CD4-positive, alpha-beta memory T cell (primary cell): ENCODE measurements at regions of chr20 and their contacts with region 1.

Region 1: GRCh38 chr20:49915378-49916145 is at the start of gene SPATA2:
- DNase-seq: peak; percentile 93 to 97 (median 94)
- H3K4me3 ChIP-seq: peak within 1 kb of the TSS; percentile 85 to 99
- H3K4me3 Mint-ChIP-seq: peak within 1 kb of the TSS; percentile 98 to 99 (median 99)
- H3K27ac ChIP-seq: peak within 1 kb of the TSS; percentile 97
- H3K27ac Mint-ChIP-seq: peak within 1 kb of the TSS; percentile 98 to 100 (median 100)
- H3K4me1 ChIP-seq: peaks cover 24% of the 10 kb centered on the region
- H3K4me1 Mint-ChIP-seq: peaks cover 20 to 47% (median 33%) of the 10 kb centered on the region in 4 donors
- H3K27me3 ChIP-seq: no peaks in the 10 kb centered on the region
- H3K27me3 Mint-ChIP-seq: peaks cover 0 to 2% of the 10 kb centered on the region in 2 donors
- total RNA-seq, gene SPATA2: 8.7 to 9.3 TPM

Region 2: GRCh38 chr20:49812463-49813304 is 102.9 kb before region 1 on chr20 and contains the start of gene SLC9A8:
- CTCF ChIA-PET with region 1: interaction called, 4 read pairs
- POLR2A ChIA-PET with region 1: interaction called, 3 read pairs
- intact Hi-C with region 1: loop called (anchors 1 kb)
- DNase-seq: peak; percentile 76 to 94 (median 82)
- H3K4me3 ChIP-seq: peak within 1 kb of the TSS; percentile 62 to 66
- H3K4me3 Mint-ChIP-seq: peak within 1 kb of the TSS; percentile 92 to 98 (median 96)
- H3K27ac ChIP-seq: peak within 1 kb of the TSS; percentile 93
- H3K27ac Mint-ChIP-seq: peak within 1 kb of the TSS; percentile 98 to 99 (median 99)
- H3K4me1 ChIP-seq: peaks cover 23% of the 10 kb centered on the region
- H3K4me1 Mint-ChIP-seq: peaks cover 22 to 50% (median 32%) of the 10 kb centered on the region in 4 donors
- H3K27me3 ChIP-seq: no peaks in the 10 kb centered on the region
- H3K27me3 Mint-ChIP-seq: no peaks in the 10 kb centered on the region
- total RNA-seq, gene SLC9A8: 24.4 to 25.6 TPM

Region 3: DNA sequence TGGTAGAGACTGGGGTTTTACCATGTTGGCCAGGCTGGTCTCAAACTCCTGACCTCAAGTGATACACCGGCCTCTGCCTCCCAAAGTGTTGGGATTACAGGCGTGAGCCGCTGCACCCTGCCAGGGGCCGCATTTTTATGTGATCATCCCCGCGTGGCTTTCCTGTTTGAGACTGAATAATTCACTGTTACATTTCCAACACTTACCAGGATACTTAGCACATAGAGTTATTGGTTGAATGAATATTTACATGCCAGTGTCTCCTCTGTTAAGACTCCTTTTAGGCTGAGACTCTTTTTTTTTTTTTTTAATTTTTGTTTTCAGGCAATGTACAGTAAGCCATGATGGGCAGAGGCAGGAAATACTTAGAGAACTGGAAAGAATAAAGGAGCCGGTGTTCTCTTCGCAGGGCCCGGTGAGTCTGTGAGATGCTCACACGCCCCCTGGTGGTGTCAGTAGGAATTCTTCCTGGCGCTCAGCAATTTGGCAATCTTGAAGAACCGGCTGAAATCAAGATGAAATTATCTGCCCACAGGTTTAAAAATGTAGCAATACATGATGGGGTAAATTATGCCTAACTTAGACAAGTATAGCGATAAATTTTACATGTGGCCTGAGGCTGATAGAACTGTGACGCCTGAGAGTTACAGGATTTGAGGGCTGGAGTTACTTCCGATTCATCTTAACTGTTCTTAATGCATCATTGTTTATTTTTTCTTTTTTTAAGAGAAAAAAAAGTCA is 13.0 kb after region 1 on chr20:
- CTCF ChIA-PET with region 1: interaction called, 9 read pairs
- POLR2A ChIA-PET with region 1: no interaction called
- intact Hi-C with region 1: loop called (anchors 1 kb)
- DNase-seq: peak; percentile 77 to 79 (median 78)
- H3K4me3 ChIP-seq: no peak overlapping the region
- H3K4me3 Mint-ChIP-seq: peak overlapping the region in 4 of 8 donors; percentile 16 to 60 (median 44)
- H3K27ac ChIP-seq: no peak overlapping the region
- H3K27ac Mint-ChIP-seq: peak overlapping the region in 6 of 7 donors; percentile 5 to 81 (median 37)
- H3K4me1 ChIP-seq: no peaks in the 10 kb centered on the region
- H3K4me1 Mint-ChIP-seq: peaks cover 1 to 5% (median 4%) of the 10 kb centered on the region in 4 donors
- H3K27me3 ChIP-seq: no peaks in the 10 kb centered on the region
- H3K27me3 Mint-ChIP-seq: peaks cover 1% of the 10 kb centered on the region in 2 donors

Region 4: DNA sequence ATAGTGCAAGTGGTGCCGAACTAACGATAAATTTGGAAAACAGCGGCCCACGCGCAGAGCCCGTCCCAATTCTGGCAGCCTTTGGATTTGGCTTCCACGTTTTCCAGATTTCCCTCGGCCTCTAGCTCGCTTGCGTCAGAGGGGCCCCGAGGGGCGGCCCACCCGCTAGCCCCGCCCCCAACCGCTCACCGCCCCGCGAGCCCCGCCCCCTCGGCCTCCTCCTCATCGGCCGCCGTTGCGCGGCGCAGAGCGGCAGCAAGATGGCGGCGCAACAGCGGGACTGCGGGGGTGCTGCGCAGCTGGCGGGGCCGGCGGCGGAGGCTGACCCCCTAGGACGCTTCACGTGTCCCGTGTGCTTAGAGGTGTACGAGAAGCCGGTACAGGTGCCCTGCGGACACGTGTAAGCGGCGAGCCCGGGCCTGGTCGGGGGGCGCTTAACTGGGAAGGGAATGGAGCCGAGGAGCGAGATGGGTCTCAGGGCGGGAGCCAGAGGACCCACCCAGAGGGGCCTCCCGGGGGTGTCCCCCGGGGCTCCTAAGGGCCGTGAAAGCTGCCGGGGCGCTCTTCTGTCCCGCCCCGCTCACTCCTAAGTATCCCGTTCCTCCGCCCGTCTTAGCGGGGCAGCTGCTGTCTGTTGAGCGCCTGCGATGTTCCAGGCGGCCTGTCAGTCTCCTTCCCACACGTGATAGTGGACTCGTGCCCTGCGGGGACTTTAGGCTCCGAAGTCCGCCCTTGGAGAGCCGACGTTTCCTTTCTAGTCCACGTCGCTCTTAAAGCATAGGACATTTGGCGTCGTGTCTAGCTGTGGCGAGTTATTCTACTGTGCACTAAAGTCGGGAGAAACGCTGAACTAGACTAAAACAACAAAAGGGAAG is 20.8 kb after region 1 on chr20 and contains the start of gene RNF114:
- CTCF ChIA-PET with region 1: interaction called, 17 read pairs
- POLR2A ChIA-PET with region 1: interaction called, 48 read pairs
- intact Hi-C with region 1: loop called (anchors 1 kb)
- DNase-seq: peak; percentile 85 to 87 (median 86)
- H3K4me3 ChIP-seq: peak within 1 kb of the TSS; percentile 88 to 100
- H3K4me3 Mint-ChIP-seq: peak within 1 kb of the TSS; percentile 97 to 99 (median 98)
- H3K27ac ChIP-seq: peak within 1 kb of the TSS; percentile 88
- H3K27ac Mint-ChIP-seq: peak within 1 kb of the TSS; percentile 83 to 98 (median 95)
- H3K4me1 ChIP-seq: peaks cover 40% of the 10 kb centered on the region
- H3K4me1 Mint-ChIP-seq: peaks cover 38 to 50% (median 43%) of the 10 kb centered on the region in 4 donors
- H3K27me3 ChIP-seq: no peaks in the 10 kb centered on the region
- H3K27me3 Mint-ChIP-seq: no peaks in the 10 kb centered on the region
- total RNA-seq, gene RNF114: 96.3 to 101 TPM

Region 5: GRCh38 chr20:50054626-50055511 is 139.3 kb after region 1 on chr20:
- CTCF ChIA-PET with region 1: no interaction called
- POLR2A ChIA-PET with region 1: no interaction called
- intact Hi-C with region 1: no loop called
- DNase-seq: no peak
- H3K4me3 ChIP-seq: no peak overlapping the region
- H3K4me3 Mint-ChIP-seq: no peak overlapping the region
- H3K27ac ChIP-seq: no peak overlapping the region
- H3K27ac Mint-ChIP-seq: no peak overlapping the region
- H3K4me1 ChIP-seq: no peaks in the 10 kb centered on the region
- H3K4me1 Mint-ChIP-seq: peaks cover 0 to 2% (median 0%) of the 10 kb centered on the region in 4 donors
- H3K27me3 ChIP-seq: no peaks in the 10 kb centered on the region
- H3K27me3 Mint-ChIP-seq: peaks cover 9 to 10% of the 10 kb centered on the region in 2 donors